CD8-positive, alpha-beta T cell (primary cell): ENCODE measurements at regions of chr4 and their contacts with region 1.

Region 1: DNA sequence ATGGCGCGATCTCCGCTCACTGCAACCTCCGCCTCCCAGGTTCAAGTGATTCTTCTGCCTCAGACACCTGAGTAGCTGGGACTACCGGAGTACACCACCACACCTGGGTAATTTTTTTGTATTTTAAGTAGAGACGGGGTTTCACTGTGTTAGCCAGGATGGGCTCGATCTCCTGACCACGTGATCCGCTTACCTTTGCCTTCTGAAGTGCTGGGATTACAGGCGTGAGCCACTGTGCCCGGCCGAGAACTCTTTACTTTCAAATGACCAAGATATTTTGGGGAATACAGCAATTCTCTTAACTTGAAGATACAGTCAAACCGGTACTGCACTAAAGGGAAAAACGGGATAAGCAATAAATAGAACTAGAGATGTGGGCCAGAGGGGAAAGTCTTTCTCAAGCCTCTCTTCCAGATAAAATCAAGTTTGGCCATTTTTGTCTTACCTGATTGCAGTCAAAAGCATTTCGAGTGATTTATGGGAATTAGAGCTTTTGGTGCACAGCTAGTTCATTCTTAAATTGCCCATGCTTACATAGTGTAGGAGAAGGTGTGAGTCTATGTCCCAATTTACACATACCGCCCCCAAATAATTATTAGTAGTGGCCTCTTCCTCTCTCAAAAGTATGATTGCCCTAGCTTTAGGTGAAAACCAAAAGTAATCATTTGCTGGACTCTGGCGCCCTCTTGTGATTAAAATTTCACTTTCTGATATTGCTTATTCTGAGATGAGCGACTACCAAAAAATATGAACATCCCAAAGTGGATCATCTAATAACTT is 53.2 kb upstream of the ABCG2 start:
- DNase-seq: peak in 7 of 9 experiments; percentile 24 to 67 (median 52)
- ATAC-seq: peak; percentile 36
- H3K4me3 ChIP-seq: no peak overlapping the region
- H3K4me3 Mint-ChIP-seq: no peak overlapping the region
- H3K27ac ChIP-seq: no peak overlapping the region
- H3K27ac Mint-ChIP-seq: no peak overlapping the region
- H3K4me1 ChIP-seq: no peaks in the 10 kb centered on the region
- H3K4me1 Mint-ChIP-seq: peaks cover 3% of the 10 kb centered on the region
- H3K27me3 ChIP-seq: no peaks in the 10 kb centered on the region
- H3K27me3 Mint-ChIP-seq: peaks cover 3% of the 10 kb centered on the region
- CTCF ChIP-seq: peak; percentile 63

Region 2: GRCh38 chr4:87498446-87498900 is 713.2 kb before region 1 on chr4:
- CTCF ChIA-PET with region 1: no interaction called
- POLR2A ChIA-PET with region 1: no interaction called
- intact Hi-C with region 1: loop called (anchors 1 to 5 kb)
- DNase-seq: no peak
- ATAC-seq: no peak
- H3K4me3 ChIP-seq: no peak overlapping the region
- H3K4me3 Mint-ChIP-seq: no peak overlapping the region
- H3K27ac ChIP-seq: no peak overlapping the region
- H3K27ac Mint-ChIP-seq: no peak overlapping the region
- H3K4me1 ChIP-seq: no peaks in the 10 kb centered on the region
- H3K4me1 Mint-ChIP-seq: peaks cover 12% of the 10 kb centered on the region
- H3K27me3 ChIP-seq: no peaks in the 10 kb centered on the region
- H3K27me3 Mint-ChIP-seq: no peaks in the 10 kb centered on the region
- CTCF ChIP-seq: no peak

Region 3: DNA sequence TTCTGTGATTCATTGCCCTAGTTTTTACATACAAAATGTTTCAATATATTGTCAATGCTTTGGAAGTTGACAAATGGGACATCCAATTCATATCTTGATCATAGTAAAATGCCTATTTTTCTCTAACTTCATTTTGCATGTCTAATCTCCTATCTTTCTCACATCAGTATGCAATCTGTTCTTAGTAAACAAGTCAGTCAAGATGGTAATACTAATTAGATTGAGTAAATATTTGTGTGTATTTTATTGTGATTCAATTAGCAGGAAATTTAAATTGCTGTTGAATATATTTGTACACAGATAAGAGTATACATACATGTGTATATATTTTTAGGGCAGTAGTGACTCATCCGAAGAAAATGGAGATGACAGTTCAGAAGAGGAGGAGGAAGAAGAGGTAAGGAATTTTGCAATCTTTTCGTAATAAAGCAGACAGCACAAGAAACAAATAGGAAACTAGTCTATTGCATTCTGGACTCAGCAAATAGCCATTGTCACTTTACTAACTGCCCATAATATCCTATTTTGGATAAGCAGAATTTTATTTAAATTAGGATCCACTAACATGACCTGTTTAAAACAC is 405.8 kb before region 1 on chr4:
- CTCF ChIA-PET with region 1: no interaction called
- POLR2A ChIA-PET with region 1: no interaction called
- intact Hi-C with region 1: no loop called
- DNase-seq: no peak
- ATAC-seq: no peak
- H3K4me3 ChIP-seq: no peak overlapping the region
- H3K4me3 Mint-ChIP-seq: no peak overlapping the region
- H3K27ac ChIP-seq: no peak overlapping the region
- H3K27ac Mint-ChIP-seq: no peak overlapping the region
- H3K4me1 ChIP-seq: no peaks in the 10 kb centered on the region
- H3K4me1 Mint-ChIP-seq: no peaks in the 10 kb centered on the region
- H3K27me3 ChIP-seq: no peaks in the 10 kb centered on the region
- H3K27me3 Mint-ChIP-seq: no peaks in the 10 kb centered on the region
- CTCF ChIP-seq: no peak

Region 4: GRCh38 chr4:87848622-87849351 is 362.9 kb before region 1 on chr4:
- CTCF ChIA-PET with region 1: interaction called, 5 read pairs
- POLR2A ChIA-PET with region 1: no interaction called
- intact Hi-C with region 1: loop called (anchors 1 kb)
- DNase-seq: peak in 6 of 9 experiments; percentile 10 to 58 (median 19)
- ATAC-seq: peak; percentile 65
- H3K4me3 ChIP-seq: peak overlapping the region in 1 of 2 experiments; percentile 10
- H3K4me3 Mint-ChIP-seq: peak overlapping the region; percentile 24
- H3K27ac ChIP-seq: no peak overlapping the region
- H3K27ac Mint-ChIP-seq: no peak overlapping the region
- H3K4me1 ChIP-seq: no peaks in the 10 kb centered on the region
- H3K4me1 Mint-ChIP-seq: peaks cover 10% of the 10 kb centered on the region
- H3K27me3 ChIP-seq: no peaks in the 10 kb centered on the region
- H3K27me3 Mint-ChIP-seq: peaks cover 18% of the 10 kb centered on the region
- CTCF ChIP-seq: peak; percentile 34

Region 5: DNA sequence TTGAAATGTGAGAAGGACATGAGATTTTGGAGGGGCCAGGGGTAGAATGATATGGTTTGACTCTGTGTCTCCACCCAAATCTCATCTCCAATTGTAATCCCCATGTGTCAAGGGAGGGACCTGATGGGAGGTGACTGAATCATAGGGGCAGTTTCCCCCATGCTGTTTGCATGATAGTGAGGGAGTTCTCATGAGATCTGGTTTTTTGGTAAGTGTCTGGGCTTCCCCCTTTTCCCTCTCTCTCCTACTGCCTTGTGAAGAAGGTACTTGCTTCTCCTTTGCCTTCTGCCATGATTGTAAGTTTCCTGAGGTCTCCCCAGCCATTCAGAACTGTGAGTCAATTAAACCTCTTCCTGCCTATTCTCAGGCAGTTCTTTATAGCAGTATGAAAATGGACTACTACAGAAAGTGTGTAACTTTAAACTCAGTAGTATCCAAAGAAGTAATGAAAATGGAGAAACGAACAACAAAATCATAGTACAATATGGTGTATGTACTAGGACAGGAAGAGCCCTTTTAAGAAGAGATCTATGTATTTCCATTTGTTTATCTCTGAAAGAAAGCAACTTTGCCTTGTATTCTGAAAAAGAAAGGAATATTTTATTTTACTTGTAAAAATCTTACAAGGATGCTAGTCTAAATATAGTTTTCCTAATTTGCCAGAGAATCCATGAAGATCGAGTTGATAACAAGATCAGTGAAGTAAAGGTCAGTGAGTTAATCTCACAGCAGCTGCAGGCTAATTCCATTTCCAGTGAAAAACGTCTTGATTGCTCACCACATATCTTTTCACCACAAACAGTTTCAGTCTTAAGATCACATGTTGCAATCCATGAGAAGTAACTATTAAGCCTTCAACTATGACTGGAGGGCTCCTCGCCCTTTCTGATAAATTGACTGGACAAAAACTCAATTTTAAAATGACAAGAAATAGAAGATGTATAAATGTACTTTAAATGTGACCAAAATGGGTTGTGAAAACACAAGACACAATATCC is 183.8 kb before region 1 on chr4:
- CTCF ChIA-PET with region 1: interaction called, 71 read pairs
- POLR2A ChIA-PET with region 1: interaction called, 5 read pairs
- intact Hi-C with region 1: loop called (anchors 1 kb)
- DNase-seq: no peak
- ATAC-seq: no peak
- H3K4me3 ChIP-seq: no peak overlapping the region
- H3K4me3 Mint-ChIP-seq: no peak overlapping the region
- H3K27ac ChIP-seq: no peak overlapping the region
- H3K27ac Mint-ChIP-seq: no peak overlapping the region
- H3K4me1 ChIP-seq: no peaks in the 10 kb centered on the region
- H3K4me1 Mint-ChIP-seq: no peaks in the 10 kb centered on the region
- H3K27me3 ChIP-seq: no peaks in the 10 kb centered on the region
- H3K27me3 Mint-ChIP-seq: no peaks in the 10 kb centered on the region
- CTCF ChIP-seq: no peak

Region 6: GRCh38 chr4:88225232-88226105 is 13.8 kb after region 1 on chr4:
- CTCF ChIA-PET with region 1: interaction called, 10 read pairs
- POLR2A ChIA-PET with region 1: no interaction called
- intact Hi-C with region 1: no loop called
- DNase-seq: no peak
- ATAC-seq: no peak
- H3K4me3 ChIP-seq: no peak overlapping the region
- H3K4me3 Mint-ChIP-seq: no peak overlapping the region
- H3K27ac ChIP-seq: no peak overlapping the region
- H3K27ac Mint-ChIP-seq: no peak overlapping the region
- H3K4me1 ChIP-seq: no peaks in the 10 kb centered on the region
- H3K4me1 Mint-ChIP-seq: peaks cover 2% of the 10 kb centered on the region
- H3K27me3 ChIP-seq: no peaks in the 10 kb centered on the region
- H3K27me3 Mint-ChIP-seq: no peaks in the 10 kb centered on the region
- CTCF ChIP-seq: no peak

Region 7: GRCh38 chr4:88523325-88524129 is 311.9 kb after region 1 on chr4 and contains the start of gene PYURF:
- CTCF ChIA-PET with region 1: interaction called, 416 read pairs
- POLR2A ChIA-PET with region 1: no interaction called
- intact Hi-C with region 1: no loop called
- DNase-seq: peak; percentile 31 to 87 (median 75)
- ATAC-seq: peak; percentile 76
- H3K4me3 ChIP-seq: peak within 1 kb of the TSS; percentile 78 to 90
- H3K4me3 Mint-ChIP-seq: peak within 1 kb of the TSS; percentile 93
- H3K27ac ChIP-seq: peak within 1 kb of the TSS; percentile 54 to 76
- H3K27ac Mint-ChIP-seq: peak within 1 kb of the TSS; percentile 94
- H3K4me1 ChIP-seq: peaks cover 16% of the 10 kb centered on the region
- H3K4me1 Mint-ChIP-seq: peaks cover 43% of the 10 kb centered on the region
- H3K27me3 ChIP-seq: no peaks in the 10 kb centered on the region
- H3K27me3 Mint-ChIP-seq: no peaks in the 10 kb centered on the region
- CTCF ChIP-seq: no peak
- total RNA-seq, gene PYURF: 25.5 to 27.6 TPM

Region 8: DNA sequence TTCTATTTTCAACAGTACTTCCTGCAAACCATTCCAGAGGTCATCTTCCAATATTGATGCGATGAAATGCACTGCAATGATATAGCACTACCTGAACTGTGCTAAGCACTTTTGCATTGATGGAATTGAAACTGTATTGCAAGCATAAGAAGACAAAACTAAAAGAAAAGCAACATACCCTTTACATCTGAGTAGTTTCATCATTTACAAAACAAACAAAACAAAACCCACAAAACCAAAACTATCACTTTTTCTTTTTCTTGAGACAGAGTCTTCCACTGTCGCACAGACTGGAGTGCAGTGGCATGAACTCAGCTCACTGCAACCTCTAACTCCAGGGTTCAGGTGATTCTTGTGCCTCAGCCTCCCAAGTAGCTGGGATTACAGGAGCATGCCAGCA is 606.1 kb after region 1 on chr4:
- CTCF ChIA-PET with region 1: no interaction called
- POLR2A ChIA-PET with region 1: no interaction called
- intact Hi-C with region 1: no loop called
- DNase-seq: no peak
- ATAC-seq: no peak
- H3K4me3 ChIP-seq: no peak overlapping the region
- H3K4me3 Mint-ChIP-seq: no peak overlapping the region
- H3K27ac ChIP-seq: no peak overlapping the region
- H3K27ac Mint-ChIP-seq: no peak overlapping the region
- H3K4me1 ChIP-seq: no peaks in the 10 kb centered on the region
- H3K4me1 Mint-ChIP-seq: peaks cover 18% of the 10 kb centered on the region
- H3K27me3 ChIP-seq: no peaks in the 10 kb centered on the region
- H3K27me3 Mint-ChIP-seq: no peaks in the 10 kb centered on the region
- CTCF ChIP-seq: no peak

Region 9: GRCh38 chr4:90127223-90127705 is 1915.6 kb after region 1 on chr4 and contains the start of gene CCSER1:
- CTCF ChIA-PET with region 1: no interaction called
- POLR2A ChIA-PET with region 1: no interaction called
- intact Hi-C with region 1: no loop called
- DNase-seq: peak in 6 of 9 experiments; percentile 1 to 52 (median 18)
- ATAC-seq: peak; percentile 60
- H3K4me3 ChIP-seq: peak within 1 kb of the TSS; percentile 24 to 27
- H3K4me3 Mint-ChIP-seq: peak within 1 kb of the TSS; percentile 73
- H3K27ac ChIP-seq: no peak within 1 kb of the TSS
- H3K27ac Mint-ChIP-seq: peak within 1 kb of the TSS; percentile 67
- H3K4me1 ChIP-seq: no peaks in the 10 kb centered on the region
- H3K4me1 Mint-ChIP-seq: peaks cover 21% of the 10 kb centered on the region
- H3K27me3 ChIP-seq: peaks cover 0 to 3% of the 10 kb centered on the region in 2 experiments
- H3K27me3 Mint-ChIP-seq: peaks cover 37% of the 10 kb centered on the region
- CTCF ChIP-seq: no peak
- total RNA-seq, gene CCSER1: 0.61 TPM in 1 of 2 experiments, not detected in the other